ENCODE measurements at regions of chr1 and their contacts with region 1.

Region 1: DNA sequence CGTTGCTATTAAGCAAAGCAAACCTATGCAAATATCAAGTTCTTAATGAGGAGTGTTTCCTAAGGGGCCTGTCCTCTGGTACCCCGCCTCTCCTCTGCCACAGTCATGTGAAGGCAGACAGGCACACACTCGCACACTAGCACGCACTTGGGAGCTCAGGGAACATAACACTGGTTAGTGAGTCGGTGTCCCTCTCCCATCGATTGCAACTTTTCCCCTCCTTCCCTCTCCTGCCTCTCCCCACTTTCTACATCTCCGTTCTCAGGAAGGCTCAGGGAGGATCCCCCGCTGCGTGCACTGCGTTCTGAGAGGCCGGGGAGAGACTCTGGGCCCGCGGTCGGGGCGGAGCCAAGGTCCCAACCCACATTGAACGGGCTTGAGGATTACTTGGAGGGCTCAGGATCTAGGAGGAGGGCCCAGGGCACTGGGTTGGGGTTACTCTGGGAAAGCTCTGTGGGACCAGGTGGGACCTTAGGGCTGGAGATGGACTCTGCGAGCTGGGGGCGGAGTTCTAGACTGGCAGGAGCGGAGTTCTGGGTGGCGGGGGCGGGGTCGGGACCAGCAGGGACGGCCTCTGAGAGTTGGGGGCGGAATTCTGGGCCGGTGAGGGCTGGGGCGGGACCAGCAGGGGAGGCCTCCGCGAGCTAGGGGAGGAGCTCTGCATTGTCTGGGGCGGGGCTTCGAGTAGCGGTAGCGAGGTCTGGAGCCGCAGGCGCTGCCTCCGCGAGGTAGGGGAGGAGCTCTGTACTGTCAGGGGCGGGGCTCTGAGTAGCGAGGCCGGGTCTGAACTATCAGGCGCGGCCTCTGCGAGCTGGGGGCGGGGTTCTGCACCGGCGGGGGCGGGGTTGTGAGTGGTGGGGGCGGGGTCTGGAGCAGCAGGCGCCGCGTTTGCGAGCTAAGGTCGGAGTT is 533 bp upstream of the LEPR start:
- DNase-seq: peak; percentile 99
- ATAC-seq: peak; percentile 98
- H3K4me3 ChIP-seq: peak overlapping the region; percentile 20 to 98
- H3K27ac ChIP-seq: peak overlapping the region in 1 of 2 donors; percentile 21
- H3K4me1 ChIP-seq: peaks cover 0 to 3% of the 10 kb centered on the region in 2 donors
- H3K27me3 ChIP-seq: no peaks in the 10 kb centered on the region

Region 2: GRCh38 chr1:65254319-65255034 is 165.5 kb before region 1 on chr1:
- intact Hi-C with region 1: loop called in 1 of 2 experiments (anchors 10 kb)
- DNase-seq: peak; percentile 86 to 92
- ATAC-seq: peak; percentile 91
- H3K4me3 ChIP-seq: peak overlapping the region; percentile 62 to 65
- H3K27ac ChIP-seq: no peak overlapping the region
- H3K4me1 ChIP-seq: no peaks in the 10 kb centered on the region
- H3K27me3 ChIP-seq: no peaks in the 10 kb centered on the region

Region 3: GRCh38 chr1:65265651-65266351 is 154.1 kb before region 1 on chr1:
- intact Hi-C with region 1: loop called in 1 of 2 experiments (anchors 10 kb)
- DNase-seq: peak; percentile 54 to 76
- ATAC-seq: peak; percentile 81
- H3K4me3 ChIP-seq: peak overlapping the region; percentile 15 to 62
- H3K27ac ChIP-seq: no peak overlapping the region
- H3K4me1 ChIP-seq: no peaks in the 10 kb centered on the region
- H3K27me3 ChIP-seq: no peaks in the 10 kb centered on the region

Region 4: GRCh38 chr1:65362545-65362944 is 57.4 kb before region 1 on chr1:
- intact Hi-C with region 1: no loop called
- DNase-seq: no peak
- ATAC-seq: no peak
- H3K4me3 ChIP-seq: no peak overlapping the region
- H3K27ac ChIP-seq: no peak overlapping the region
- H3K4me1 ChIP-seq: peaks cover 0 to 2% of the 10 kb centered on the region in 2 donors
- H3K27me3 ChIP-seq: no peaks in the 10 kb centered on the region

Measured in aorta (tissue), 5 donors.